AG04449 (cell line): ENCODE measurements at regions of chr3 and their contacts with region 1.

Region 1: DNA sequence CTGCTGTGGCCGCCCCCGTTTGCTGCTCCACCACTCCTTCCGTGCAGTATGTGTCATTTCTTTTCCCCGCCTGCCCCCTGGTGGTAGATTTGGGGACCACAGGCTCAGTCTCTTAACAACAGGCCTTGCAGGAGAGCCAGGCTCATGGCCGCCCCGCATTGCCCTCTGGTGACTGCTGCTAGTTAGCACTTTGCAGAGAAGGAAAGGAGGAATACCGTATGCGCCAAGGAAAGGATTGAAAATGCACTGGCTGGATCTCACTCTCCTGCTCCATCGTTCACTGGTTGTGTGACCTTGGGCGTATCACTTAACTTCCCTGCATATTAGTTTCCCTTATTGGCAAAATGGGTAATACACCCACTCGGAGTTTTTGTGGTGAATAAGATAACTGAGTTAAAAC is 39.3 kb upstream of the PXYLP1 start:
- DNase-seq: peak; percentile 63
- H3K4me3 ChIP-seq: no peak overlapping the region
- CTCF ChIP-seq: peak; percentile 99

Region 2: DNA sequence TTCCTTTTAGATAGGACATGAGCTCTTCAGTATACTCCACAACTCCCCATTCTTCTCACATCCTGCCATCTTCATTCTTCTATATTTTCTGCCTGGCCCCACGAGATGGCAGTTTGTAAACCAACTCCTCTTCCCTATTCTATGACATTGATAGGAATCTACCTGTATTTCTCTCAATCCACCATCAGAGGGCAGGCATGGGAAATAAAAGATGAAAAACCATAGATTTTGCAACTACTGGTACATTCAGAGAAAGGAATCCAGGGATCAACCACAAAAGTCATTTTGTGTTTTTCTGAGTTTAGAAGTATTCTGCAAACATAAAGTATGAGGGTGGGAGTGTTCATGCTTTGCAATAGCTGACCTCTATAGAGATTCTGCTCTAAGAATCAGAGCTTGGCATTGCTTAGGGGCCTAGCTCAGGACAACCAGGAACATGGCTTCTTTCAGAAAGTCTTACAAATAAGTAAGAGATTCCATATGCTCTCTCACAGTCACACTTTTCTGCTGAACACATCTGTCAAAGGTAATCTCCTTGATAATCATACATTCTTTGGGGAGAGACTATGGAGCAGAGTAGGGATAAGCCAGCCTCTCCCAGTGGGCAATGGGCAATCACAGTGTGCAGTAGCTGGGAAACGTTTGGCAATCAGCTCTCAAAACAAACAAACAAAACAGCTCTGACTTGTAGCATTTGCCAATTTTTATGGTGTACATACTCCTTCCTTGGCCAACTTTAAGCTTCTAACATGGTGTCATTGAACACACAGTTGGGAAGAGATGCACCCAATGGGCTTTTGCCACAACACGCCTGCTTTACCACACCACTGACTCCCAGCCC is 293.8 kb before region 1 on chr3:
- CTCF ChIA-PET with region 1: interaction called, 22 read pairs
- POLR2A ChIA-PET with region 1: no interaction called
- DNase-seq: peak; percentile 65
- H3K4me3 ChIP-seq: no peak overlapping the region
- CTCF ChIP-seq: peak; percentile 64

Region 3: GRCh38 chr3:140922634-140923033 is 269.7 kb before region 1 on chr3:
- CTCF ChIA-PET with region 1: interaction called, 10 read pairs
- POLR2A ChIA-PET with region 1: no interaction called
- DNase-seq: no peak
- H3K4me3 ChIP-seq: no peak overlapping the region
- CTCF ChIP-seq: peak; percentile 34

Region 4: DNA sequence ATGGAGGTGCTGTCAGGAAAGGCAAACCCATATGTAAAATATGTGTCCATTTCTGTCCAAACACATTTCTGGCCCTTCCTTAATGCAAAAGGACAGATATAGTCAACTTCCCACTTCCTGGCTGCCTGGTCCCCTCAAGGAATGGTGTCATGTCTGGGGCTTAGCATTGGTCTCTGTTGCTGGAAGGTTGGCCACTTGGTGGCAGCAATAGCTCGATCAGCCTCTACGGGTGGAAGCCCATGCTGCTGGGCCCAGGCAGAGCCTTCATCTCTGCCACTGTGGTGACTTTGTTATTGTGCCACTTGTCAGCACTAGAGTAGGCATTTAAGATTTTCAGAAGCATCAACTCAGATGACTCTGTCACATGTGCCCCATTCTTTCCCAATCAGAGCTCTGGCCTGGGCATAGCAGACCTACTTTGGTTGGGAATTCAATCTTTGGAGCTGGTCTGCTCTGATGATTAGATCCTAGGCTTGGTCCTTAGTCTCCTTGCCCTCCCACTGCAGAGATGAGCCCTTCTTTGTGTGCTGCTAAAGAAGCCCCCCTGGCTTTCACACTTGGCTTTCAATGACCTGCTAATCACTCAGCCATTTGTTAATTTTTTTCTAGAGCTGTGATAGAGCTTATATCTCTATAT is 192.2 kb before region 1 on chr3:
- CTCF ChIA-PET with region 1: interaction called, 67 read pairs
- POLR2A ChIA-PET with region 1: no interaction called
- DNase-seq: no peak
- H3K4me3 ChIP-seq: no peak overlapping the region
- CTCF ChIP-seq: peak; percentile 69

Region 5: GRCh38 chr3:141011232-141011996 is 180.9 kb before region 1 on chr3:
- CTCF ChIA-PET with region 1: interaction called, 12 read pairs
- POLR2A ChIA-PET with region 1: no interaction called
- DNase-seq: no peak
- H3K4me3 ChIP-seq: no peak overlapping the region
- CTCF ChIP-seq: peak; percentile 88

Region 6: DNA sequence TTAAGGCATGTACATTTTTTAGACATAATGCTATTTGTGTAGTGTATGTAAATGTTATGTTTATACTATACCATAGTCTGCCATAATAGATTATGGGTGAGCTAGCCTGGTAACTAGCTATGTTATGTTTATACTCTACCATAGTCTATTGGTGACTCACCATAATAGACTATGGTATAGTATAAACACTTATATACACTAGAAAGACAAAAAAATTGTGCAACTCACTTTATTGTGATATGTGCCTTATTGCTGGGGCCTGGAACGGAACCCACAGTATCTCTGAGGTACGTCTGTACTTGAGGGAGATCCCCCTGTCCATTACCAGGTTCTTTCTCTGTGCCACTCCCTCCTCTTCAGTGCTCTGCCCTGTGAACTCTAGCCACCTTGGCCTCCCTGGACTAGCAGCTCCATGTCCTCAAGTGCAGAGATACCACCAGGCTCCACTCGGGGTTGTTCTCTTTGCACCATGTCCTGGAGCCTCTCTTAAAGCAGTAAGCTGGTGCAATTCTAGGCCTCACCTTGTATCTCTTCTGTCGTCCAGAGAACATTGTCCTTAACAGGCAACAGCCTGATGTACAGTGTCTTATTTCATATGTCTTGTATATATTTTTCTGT is 21.6 kb before region 1 on chr3:
- CTCF ChIA-PET with region 1: interaction called, 16 read pairs
- POLR2A ChIA-PET with region 1: no interaction called
- DNase-seq: no peak
- H3K4me3 ChIP-seq: no peak overlapping the region
- CTCF ChIP-seq: no peak

Region 7: GRCh38 chr3:141178026-141178425 is 14.3 kb before region 1 on chr3:
- CTCF ChIA-PET with region 1: interaction called, 16 read pairs
- POLR2A ChIA-PET with region 1: no interaction called
- DNase-seq: no peak
- H3K4me3 ChIP-seq: no peak overlapping the region
- CTCF ChIP-seq: no peak

Region 8: DNA sequence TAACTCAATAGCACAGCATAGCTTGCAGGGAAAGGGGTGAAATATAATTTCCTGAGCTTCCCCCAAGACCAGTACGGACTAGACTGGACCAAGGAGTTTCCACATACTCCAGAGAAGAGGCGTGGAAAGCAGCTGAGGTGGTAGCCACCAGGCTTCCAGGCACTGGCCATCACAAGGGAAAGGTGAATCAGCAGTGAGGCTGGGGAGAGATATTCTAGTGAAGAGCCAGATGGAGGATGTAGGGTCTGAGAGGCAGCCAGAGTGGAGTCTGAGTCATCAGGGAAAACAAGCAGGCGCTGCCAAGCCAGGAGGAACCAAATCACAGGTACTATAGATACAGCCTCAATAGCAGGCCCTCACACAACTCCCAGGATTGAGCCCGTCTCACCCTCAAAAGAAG is 284.9 kb after region 1 on chr3:
- CTCF ChIA-PET with region 1: no interaction called
- POLR2A ChIA-PET with region 1: no interaction called
- DNase-seq: no peak
- H3K4me3 ChIP-seq: no peak overlapping the region
- CTCF ChIP-seq: no peak